ENCODE measurements at regions of chr2 and their contacts with region 1.

Region 1: DNA sequence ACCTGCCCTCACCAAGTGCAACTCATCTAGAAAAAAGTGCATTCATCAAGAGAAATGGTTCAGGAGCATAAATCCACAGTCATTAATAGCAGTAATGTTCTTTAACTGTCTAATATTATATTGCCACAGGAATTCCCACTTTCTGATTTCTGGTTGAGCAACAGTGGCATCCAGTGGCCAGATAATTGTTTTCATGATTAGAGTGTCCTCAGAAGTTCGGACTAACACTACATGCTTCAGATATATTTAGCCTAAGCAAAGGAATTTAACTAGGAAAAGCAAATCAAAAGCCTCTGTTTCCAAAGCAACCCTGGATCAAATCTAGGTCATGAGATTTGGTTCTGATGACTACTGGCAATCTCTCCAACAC is 9.8 kb upstream of the ERBB4 start:
- DNase-seq: no peak
- ATAC-seq: peak; percentile 71 to 95 (median 78)
- H3K4me3 ChIP-seq: no peak overlapping the region
- H3K27ac ChIP-seq: no peak overlapping the region
- H3K4me1 ChIP-seq: no peaks in the 10 kb centered on the region
- H3K27me3 ChIP-seq: no peaks in the 10 kb centered on the region
- CTCF ChIP-seq: peak; percentile 53

Region 2: GRCh38 chr2:211745295-211746097 is 802.9 kb before region 1 on chr2:
- intact Hi-C with region 1: loop called (anchors 5 kb)
- DNase-seq: peak; percentile 16 to 53
- ATAC-seq: peak in 3 of 4 donors; percentile 74 to 90 (median 83)
- H3K4me3 ChIP-seq: no peak overlapping the region
- H3K27ac ChIP-seq: no peak overlapping the region
- H3K4me1 ChIP-seq: no peaks in the 10 kb centered on the region
- H3K27me3 ChIP-seq: no peaks in the 10 kb centered on the region
- CTCF ChIP-seq: peak; percentile 93

Region 3: DNA sequence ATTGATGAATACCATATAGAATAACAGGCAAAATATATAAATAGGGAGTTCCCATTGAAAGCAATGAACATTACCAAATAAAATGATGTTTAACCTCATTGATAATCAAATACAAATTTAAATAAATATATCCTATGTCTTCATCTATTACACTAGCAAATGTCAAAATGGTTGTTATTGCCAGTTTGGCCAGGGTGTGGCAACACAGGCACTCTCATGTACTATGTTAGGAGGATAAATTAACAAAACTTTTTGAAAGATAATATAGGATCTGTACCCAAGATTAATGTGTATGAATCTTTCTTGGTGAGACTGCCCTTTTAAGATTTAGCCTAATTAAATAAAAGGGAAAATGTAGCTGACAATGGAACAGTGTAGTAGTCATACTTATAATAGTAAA is 669.1 kb before region 1 on chr2:
- intact Hi-C with region 1: loop called (anchors 10 kb)
- DNase-seq: no peak
- ATAC-seq: peak in 1 of 4 donors; percentile 72
- H3K4me3 ChIP-seq: no peak overlapping the region
- H3K27ac ChIP-seq: no peak overlapping the region
- H3K4me1 ChIP-seq: no peaks in the 10 kb centered on the region
- H3K27me3 ChIP-seq: no peaks in the 10 kb centered on the region
- CTCF ChIP-seq: peak; percentile 45

Region 4: DNA sequence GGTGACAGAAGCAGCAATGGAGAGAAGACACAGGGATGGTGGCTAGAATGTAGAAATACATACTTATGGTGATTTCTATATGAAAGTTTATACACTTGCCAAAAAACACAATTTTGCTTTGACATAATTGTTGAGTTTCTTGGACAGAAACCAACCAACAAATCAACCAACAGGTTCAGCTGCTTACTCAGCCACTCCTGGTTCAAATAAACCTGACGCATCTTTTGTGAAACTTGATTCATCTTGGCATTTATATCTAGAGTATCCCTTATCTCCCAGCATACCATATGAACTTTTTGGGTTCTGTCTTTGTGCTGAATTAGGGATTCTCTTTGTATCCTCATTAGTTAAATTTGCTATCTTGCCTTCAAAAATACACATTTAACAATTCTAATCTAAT is 44.3 kb after region 1 on chr2:
- intact Hi-C with region 1: no loop called
- DNase-seq: no peak
- ATAC-seq: no peak
- H3K4me3 ChIP-seq: no peak overlapping the region
- H3K27ac ChIP-seq: no peak overlapping the region
- H3K4me1 ChIP-seq: no peaks in the 10 kb centered on the region
- H3K27me3 ChIP-seq: no peaks in the 10 kb centered on the region
- CTCF ChIP-seq: no peak